ENCODE measurements at regions of chr18 and their contacts with region 1.

Region 1: GRCh38 chr18:23619388-23619881 is 33.1 kb upstream of the NPC1 start:
- DNase-seq: no peak
- ATAC-seq: peak; percentile 12
- H3K4me3 ChIP-seq: no peak overlapping the region
- H3K27ac ChIP-seq: no peak overlapping the region
- H3K4me1 ChIP-seq: peaks cover 0 to 8% of the 10 kb centered on the region in 2 experiments; a peak in 2 of 5 replicates
- H3K27me3 ChIP-seq: peaks cover 26% of the 10 kb centered on the region in 2 experiments
- CTCF ChIP-seq: no peak
- EP300 ChIP-seq: no peak
- POLR2A ChIP-seq: no peak
- RAD21 ChIP-seq: no peak

Region 2: GRCh38 chr18:23812546-23813440 is 193.4 kb after region 1 on chr18:
- CTCF ChIA-PET with region 1: interaction called, 11 read pairs
- POLR2A ChIA-PET with region 1: no interaction called
- in situ Hi-C with region 1: no loop called
- intact Hi-C with region 1: loop called (anchors 2 kb)
- DNase-seq: peak; percentile 12 to 24 (median 22)
- ATAC-seq: peak; percentile 53; the same call in 1 of the 3 replicates
- H3K4me3 ChIP-seq: no peak overlapping the region
- H3K27ac ChIP-seq: no peak overlapping the region
- H3K4me1 ChIP-seq: no peaks in the 10 kb centered on the region
- H3K27me3 ChIP-seq: peaks cover 0 to 21% of the 10 kb centered on the region in 2 experiments; a peak in 3 of 5 replicates
- CTCF ChIP-seq: peak in 2 of 3 experiments; percentile 13 to 71; a peak in 4 of 6 replicates
- EP300 ChIP-seq: no peak
- POLR2A ChIP-seq: no peak
- RAD21 ChIP-seq: peak; percentile 57 to 81

Measured in K562 (cell line).